OCI-LY7 (cell line): ENCODE measurements at regions of chr6 and their contacts with region 1.

Region 1: DNA sequence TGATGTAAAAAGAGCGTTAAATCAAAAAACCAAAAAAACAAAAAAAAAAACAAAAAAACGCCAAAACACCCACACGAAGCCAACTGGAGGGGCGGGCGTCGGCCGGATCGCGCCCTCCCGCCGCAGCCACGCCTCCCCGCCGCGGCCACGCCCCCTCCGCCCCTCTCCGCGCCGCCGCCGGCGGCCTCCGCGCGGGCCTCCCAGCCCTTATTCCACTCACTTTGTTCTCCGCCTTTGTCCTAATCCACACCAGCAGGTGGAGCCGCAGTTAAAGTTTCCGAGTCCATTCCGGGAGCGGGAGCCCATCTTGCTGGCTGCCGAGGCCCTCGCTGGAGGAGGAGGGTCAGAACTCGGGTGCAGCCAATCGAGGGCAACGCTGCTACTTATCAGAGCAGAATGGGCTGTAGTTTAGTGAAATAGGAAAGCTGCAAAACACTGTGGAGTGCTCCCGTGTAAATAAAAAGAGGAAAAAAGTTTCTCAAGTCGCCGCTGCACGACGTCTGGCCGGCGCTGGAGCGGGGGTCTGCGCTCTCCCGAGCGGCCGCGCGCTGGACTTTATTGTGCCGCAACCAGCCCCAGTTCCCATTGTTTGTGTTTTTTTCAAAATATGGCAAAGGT is at the start of gene ASF1A:
- DNase-seq: peak; percentile 97
- H3K4me3 ChIP-seq: peak within 1 kb of the TSS; percentile 80
- H3K27ac ChIP-seq: peak within 1 kb of the TSS; percentile 89
- H3K4me1 ChIP-seq: peaks cover 60% of the 10 kb centered on the region
- CTCF ChIP-seq: peak; percentile 68
- total RNA-seq, gene ASF1A: 19.8 and 37.3 TPM in 2 replicates

Region 2: DNA sequence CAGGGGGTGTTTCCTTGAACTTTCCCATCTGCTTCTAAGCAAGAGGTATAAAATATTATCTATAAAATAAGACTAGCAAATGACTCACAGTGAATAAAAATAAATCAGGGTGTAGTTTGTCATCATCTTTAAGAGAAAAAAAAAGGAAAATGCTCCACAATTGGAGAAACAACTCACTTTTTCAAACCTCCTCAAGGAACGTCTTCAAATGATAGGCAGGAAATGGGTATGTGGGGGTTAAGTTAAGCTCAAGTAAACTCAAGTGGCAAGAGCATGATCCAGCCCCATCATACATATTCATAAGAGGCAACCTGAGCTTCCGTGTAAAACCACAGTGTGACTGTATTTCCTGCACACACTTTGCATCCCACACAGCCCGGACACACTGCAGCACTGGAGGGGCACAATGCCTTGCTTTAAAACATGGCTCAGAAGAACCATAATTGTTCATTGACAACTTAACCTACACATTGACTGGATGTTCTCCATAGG is 184.0 kb before region 1 on chr6:
- CTCF ChIA-PET with region 1: interaction called, 3 read pairs
- POLR2A ChIA-PET with region 1: interaction called, 6 read pairs
- intact Hi-C with region 1: loop called (anchors 2 kb)
- DNase-seq: peak; percentile 96
- H3K4me3 ChIP-seq: peak overlapping the region; percentile 80
- H3K27ac ChIP-seq: peak overlapping the region; percentile 87
- H3K4me1 ChIP-seq: peaks cover 45% of the 10 kb centered on the region
- CTCF ChIP-seq: no peak

Region 3: GRCh38 chr6:118881440-118882313 is 12.2 kb before region 1 on chr6:
- CTCF ChIA-PET with region 1: interaction called, 6 read pairs
- POLR2A ChIA-PET with region 1: interaction called, 88 read pairs
- intact Hi-C with region 1: no loop called
- DNase-seq: peak; percentile 67
- H3K4me3 ChIP-seq: peak overlapping the region; percentile 53
- H3K27ac ChIP-seq: peak overlapping the region; percentile 58
- H3K4me1 ChIP-seq: peaks cover 46% of the 10 kb centered on the region
- CTCF ChIP-seq: no peak

Region 4: GRCh38 chr6:119110601-119111548 is 217.0 kb after region 1 on chr6:
- CTCF ChIA-PET with region 1: no interaction called
- POLR2A ChIA-PET with region 1: no interaction called
- intact Hi-C with region 1: loop called (anchors 2 kb)
- DNase-seq: peak; percentile 54
- H3K4me3 ChIP-seq: no peak overlapping the region
- H3K27ac ChIP-seq: no peak overlapping the region
- H3K4me1 ChIP-seq: no peaks in the 10 kb centered on the region
- CTCF ChIP-seq: peak; percentile 80

Region 5: DNA sequence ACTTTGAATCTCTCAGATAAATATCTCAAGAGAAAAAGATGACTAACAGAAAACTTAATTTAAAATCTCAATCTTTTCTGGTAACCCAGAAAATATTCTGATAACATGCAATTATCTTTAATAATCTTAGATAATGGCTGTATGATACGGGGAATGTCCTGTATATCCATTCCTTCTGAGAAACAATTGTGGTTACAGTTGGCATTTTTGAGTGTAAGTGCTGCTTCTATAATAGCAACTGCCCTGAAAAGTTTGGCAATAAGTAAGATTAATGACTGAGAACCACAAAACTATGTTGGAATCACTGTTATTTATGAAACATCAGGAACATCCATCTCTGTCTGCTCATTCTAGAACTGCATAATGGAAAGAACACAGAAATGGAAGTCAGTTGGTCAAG is 1620.6 kb after region 1 on chr6:
- CTCF ChIA-PET with region 1: no interaction called
- POLR2A ChIA-PET with region 1: no interaction called
- intact Hi-C with region 1: no loop called
- DNase-seq: no peak
- H3K4me3 ChIP-seq: no peak overlapping the region
- H3K27ac ChIP-seq: no peak overlapping the region
- H3K4me1 ChIP-seq: no peaks in the 10 kb centered on the region
- CTCF ChIP-seq: no peak